ENCODE measurements at regions of chr19 and their contacts with region 1.

Region 1: GRCh38 chr19:6260912-6261650 is 18.7 kb downstream of the MLLT1 start:
- DNase-seq: peak; percentile 38 to 90
- H3K4me3 ChIP-seq: no peak overlapping the region
- H3K27ac ChIP-seq: no peak overlapping the region
- H3K4me1 ChIP-seq: no peaks in the 10 kb centered on the region; a peak in 4 of 7 replicates
- H3K27me3 ChIP-seq: no peaks in the 10 kb centered on the region
- CTCF ChIP-seq: peak; percentile 67 to 82 (median 82)
- EP300 ChIP-seq: no peak
- POLR2A ChIP-seq: no peak
- RAD21 ChIP-seq: peak; percentile 42 to 68

Region 2: DNA sequence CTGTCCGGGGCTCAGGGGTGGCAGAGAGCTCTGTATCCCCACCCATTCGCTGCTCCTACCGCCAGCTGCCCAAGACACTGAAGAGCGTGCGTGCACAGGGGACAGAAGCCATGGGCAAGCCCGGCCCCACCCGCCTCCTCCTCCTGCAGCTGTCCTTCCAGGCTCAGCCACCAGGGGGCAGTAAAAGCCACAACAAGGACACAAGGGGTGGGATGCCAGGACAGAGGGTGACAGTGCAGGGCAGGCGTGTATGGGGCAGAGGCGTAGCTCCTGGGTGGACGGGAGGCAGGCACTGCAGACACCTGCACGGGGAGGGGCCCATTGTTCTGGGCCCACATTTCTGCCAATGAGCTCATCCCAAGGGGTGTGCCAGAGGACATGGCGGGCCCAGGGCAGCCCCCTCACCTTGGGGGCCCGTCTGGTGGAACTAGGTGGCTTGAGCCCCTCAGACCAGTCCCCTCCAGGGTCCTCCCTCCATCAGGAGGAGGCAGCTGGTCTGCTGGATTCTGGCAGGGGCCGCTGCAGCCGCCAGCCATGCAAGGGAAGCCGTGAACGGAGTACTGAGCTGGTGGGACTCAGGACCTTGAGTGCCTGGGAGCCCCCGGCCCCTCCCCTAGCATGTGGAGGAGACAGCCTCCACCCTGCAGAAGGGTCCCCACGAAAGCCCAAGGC is 42.5 kb before region 1 on chr19:
- CTCF ChIA-PET with region 1: interaction called, 16 read pairs
- POLR2A ChIA-PET with region 1: interaction called, 3 read pairs
- DNase-seq: peak; percentile 70 to 99
- H3K4me3 ChIP-seq: no peak overlapping the region
- H3K27ac ChIP-seq: no peak overlapping the region
- H3K4me1 ChIP-seq: peaks cover 0 to 17% (median 6%) of the 10 kb centered on the region in 4 experiments; a peak in 5 of 7 replicates
- H3K27me3 ChIP-seq: no peaks in the 10 kb centered on the region; a peak in 1 of 7 replicates
- CTCF ChIP-seq: peak; percentile 88 to 99 (median 95)
- EP300 ChIP-seq: no peak
- POLR2A ChIP-seq: no peak
- RAD21 ChIP-seq: peak; percentile 83 to 87

Region 3: GRCh38 chr19:6223488-6224301 is 37.4 kb before region 1 on chr19:
- CTCF ChIA-PET with region 1: interaction called, 16 read pairs
- POLR2A ChIA-PET with region 1: no interaction called
- DNase-seq: no peak
- H3K4me3 ChIP-seq: no peak overlapping the region
- H3K27ac ChIP-seq: no peak overlapping the region
- H3K4me1 ChIP-seq: no peaks in the 10 kb centered on the region; a peak in 1 of 7 replicates
- H3K27me3 ChIP-seq: no peaks in the 10 kb centered on the region; a peak in 1 of 7 replicates
- CTCF ChIP-seq: no peak
- EP300 ChIP-seq: no peak
- POLR2A ChIP-seq: no peak
- RAD21 ChIP-seq: no peak

Region 4: GRCh38 chr19:6249296-6249695 is 11.8 kb before region 1 on chr19:
- CTCF ChIA-PET with region 1: interaction called, 14 read pairs
- POLR2A ChIA-PET with region 1: no interaction called
- DNase-seq: no peak
- H3K4me3 ChIP-seq: no peak overlapping the region
- H3K27ac ChIP-seq: no peak overlapping the region
- H3K4me1 ChIP-seq: peaks cover 0 to 1% (median under 1%) of the 10 kb centered on the region in 4 experiments; a peak in 4 of 7 replicates
- H3K27me3 ChIP-seq: no peaks in the 10 kb centered on the region
- CTCF ChIP-seq: no peak
- EP300 ChIP-seq: no peak
- POLR2A ChIP-seq: no peak
- RAD21 ChIP-seq: no peak

Region 5: GRCh38 chr19:6273701-6274601 is 12.9 kb after region 1 on chr19:
- CTCF ChIA-PET with region 1: interaction called, 41 read pairs
- POLR2A ChIA-PET with region 1: interaction called, 8 read pairs
- DNase-seq: no peak
- H3K4me3 ChIP-seq: no peak overlapping the region; a peak in 1 of 8 replicates
- H3K27ac ChIP-seq: no peak overlapping the region
- H3K4me1 ChIP-seq: peaks cover 6 to 49% (median 23%) of the 10 kb centered on the region in 4 experiments
- H3K27me3 ChIP-seq: no peaks in the 10 kb centered on the region; a peak in 1 of 7 replicates
- CTCF ChIP-seq: no peak
- EP300 ChIP-seq: no peak
- POLR2A ChIP-seq: no peak
- RAD21 ChIP-seq: no peak

Region 6: GRCh38 chr19:6372594-6373095 is 111.6 kb after region 1 on chr19 and contains the start of gene ALKBH7:
- CTCF ChIA-PET with region 1: no interaction called
- POLR2A ChIA-PET with region 1: no interaction called
- DNase-seq: peak; percentile 92 to 97
- H3K4me3 ChIP-seq: peak within 1 kb of the TSS; percentile 82 to 100 (median 92)
- H3K27ac ChIP-seq: peak within 1 kb of the TSS; percentile 79
- H3K4me1 ChIP-seq: peaks cover 0 to 11% (median 7%) of the 10 kb centered on the region in 4 experiments; a peak in 5 of 7 replicates
- H3K27me3 ChIP-seq: no peaks in the 10 kb centered on the region
- CTCF ChIP-seq: no peak
- EP300 ChIP-seq: no peak
- POLR2A ChIP-seq: no peak; a peak in 1 of 3 replicates
- RAD21 ChIP-seq: no peak
- total RNA-seq, gene ALKBH7: 66.3 and 75.6 TPM in 2 replicates

Measured in H1 (cell line).